ENCODE measurements at regions of chr5 and their contacts with region 1.

Region 1: DNA sequence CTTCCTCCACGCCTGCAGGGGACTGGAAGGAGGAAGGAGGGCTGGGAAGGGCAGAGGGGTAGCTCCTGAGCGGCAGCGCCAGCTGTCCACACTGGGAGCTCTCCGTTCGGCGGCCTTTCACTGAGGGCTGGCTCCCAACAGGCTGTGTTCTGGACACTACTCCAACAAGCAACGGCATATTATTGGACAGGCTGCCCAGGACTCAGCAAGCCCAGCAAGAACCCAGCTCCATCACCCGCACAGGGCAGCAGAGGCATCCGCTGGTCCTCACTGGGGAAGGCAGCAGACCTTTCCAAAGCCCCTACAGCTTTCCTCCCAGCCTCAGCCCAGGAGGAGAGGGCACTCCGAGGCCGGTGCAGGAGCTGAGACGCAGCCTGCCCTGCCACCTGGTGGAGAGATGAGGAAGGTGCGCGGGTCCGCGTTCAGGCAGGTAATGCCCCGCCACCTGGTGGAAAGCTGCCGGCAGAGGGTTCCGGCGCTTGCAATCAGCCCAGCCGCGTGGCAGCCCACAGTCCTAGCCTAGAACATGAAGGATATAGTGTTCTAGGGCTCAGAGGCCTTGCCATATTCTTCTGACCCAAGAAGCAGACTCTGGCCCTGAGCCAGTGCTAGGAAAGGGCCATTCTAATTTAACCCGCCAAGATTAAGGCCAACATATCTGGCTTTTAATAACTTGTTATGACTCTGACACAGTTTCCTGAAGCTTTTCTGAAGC is 74.4 kb downstream of the NRG2 start:
- DNase-seq: peak; percentile 90
- CTCF ChIP-seq: peak; percentile 100

Region 2: GRCh38 chr5:139787568-139788293 is 181.0 kb before region 1 on chr5:
- CTCF ChIA-PET with region 1: interaction called, 439 read pairs
- POLR2A ChIA-PET with region 1: no interaction called
- DNase-seq: peak; percentile 94
- CTCF ChIP-seq: peak; percentile 95

Region 3: GRCh38 chr5:139837631-139838422 is 130.9 kb before region 1 on chr5:
- CTCF ChIA-PET with region 1: interaction called, 73 read pairs
- POLR2A ChIA-PET with region 1: no interaction called
- DNase-seq: no peak
- CTCF ChIP-seq: no peak

Region 4: DNA sequence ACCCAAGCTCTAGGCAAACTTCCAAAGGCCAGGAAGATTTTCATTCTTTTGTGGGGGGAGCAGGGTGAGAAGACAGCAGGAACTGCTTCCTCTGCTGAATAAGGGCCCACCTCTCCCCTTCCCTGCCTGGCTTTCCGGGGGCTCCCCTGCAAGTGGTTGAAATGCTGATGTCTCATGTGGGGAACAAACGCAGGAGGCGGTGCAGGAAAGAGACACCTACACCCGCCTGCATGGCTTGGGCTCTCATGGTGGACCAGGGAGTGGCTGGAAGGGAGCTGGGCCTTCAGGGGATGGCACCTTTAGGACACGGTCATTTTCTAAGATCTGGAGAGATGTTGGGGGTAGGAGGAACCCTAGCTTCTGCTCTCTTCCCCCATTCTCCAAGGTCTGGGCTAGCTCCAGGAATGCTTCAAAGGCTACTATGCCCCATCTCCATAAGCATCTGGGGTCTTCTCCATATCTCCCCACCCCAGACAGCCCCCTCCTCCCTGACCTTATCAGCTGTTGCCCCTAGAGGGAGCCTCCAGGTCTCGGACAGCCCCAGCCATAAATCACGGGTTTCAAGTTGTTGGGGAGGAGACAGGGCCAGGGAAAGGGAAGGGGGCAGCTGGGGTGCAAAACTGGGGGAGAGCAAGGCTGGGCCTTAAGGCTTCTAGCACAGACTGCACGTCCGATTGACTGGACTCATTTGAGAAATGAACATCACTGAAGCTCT is 96.5 kb before region 1 on chr5:
- CTCF ChIA-PET with region 1: interaction called, 38 read pairs
- POLR2A ChIA-PET with region 1: no interaction called
- DNase-seq: no peak
- CTCF ChIP-seq: peak; percentile 6

Region 5: GRCh38 chr5:139925650-139926640 is 42.8 kb before region 1 on chr5:
- CTCF ChIA-PET with region 1: interaction called, 13 read pairs
- POLR2A ChIA-PET with region 1: no interaction called
- DNase-seq: no peak
- CTCF ChIP-seq: no peak

Region 6: DNA sequence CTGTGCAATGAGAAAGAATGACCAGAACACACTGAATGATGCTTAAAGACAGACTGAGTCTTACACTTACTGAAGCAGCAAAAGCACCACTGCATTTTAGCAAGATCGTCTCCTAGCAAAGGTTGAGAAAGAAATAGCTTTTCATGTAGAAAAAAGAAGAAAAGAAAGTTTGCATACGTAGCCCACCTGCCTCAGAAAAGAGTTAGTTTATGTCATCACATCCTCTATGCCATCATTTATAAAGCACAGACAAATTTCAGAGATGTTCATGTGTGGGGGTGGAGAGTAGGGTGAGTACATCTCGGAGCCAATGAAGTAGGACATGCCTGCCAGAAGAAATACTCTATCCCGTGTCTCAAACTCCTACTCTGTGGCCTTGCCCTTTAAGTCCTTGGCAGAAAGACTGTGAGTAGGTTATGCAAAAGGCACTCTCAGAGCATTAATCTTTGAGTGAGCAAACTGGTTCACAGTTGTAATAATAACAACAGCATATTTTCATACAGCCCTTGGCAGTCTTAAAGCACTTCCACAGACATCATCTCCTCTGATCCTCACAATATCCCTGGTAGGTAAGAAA is 52.0 kb after region 1 on chr5:
- CTCF ChIA-PET with region 1: interaction called, 17 read pairs
- POLR2A ChIA-PET with region 1: no interaction called
- DNase-seq: no peak
- CTCF ChIP-seq: no peak

Region 7: DNA sequence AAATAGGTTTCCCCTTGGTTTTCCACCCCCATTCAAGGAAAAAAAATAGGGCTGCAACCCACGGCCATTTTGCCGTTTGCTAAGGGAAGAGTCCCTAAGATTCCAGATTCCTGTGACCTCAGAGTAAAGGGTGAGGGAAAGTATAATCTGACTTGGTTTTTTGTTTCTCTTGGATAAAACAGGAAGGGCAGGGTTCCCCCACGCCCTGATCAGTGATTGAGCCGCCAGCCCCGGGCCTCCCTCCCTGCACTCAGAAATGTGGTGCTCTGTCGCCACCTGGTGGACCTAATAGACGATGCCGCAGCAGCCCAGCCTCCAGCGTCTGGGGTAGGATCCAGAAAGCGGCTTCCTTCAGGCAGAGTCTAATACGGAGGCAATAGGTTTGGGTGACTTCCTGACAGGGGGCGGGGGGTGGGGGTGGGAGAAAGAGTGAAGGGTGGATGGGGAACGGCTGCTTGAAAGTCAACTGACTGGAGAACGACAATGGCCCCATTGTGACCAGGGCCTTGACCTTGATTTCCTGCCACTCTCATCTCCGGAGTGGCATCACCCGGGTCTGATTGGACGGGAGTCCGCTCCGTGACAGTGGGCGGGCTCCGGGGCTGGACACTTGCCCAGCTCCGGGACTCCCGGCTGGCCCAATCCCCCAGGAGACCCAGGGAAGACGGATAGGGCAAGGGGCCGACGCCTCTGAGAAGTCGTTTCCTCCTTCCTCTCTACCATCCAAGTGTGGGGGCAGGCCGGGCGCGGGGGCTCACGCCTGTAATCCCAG is 188.5 kb after region 1 on chr5:
- CTCF ChIA-PET with region 1: interaction called, 22 read pairs
- POLR2A ChIA-PET with region 1: no interaction called
- DNase-seq: peak; percentile 90
- CTCF ChIP-seq: peak; percentile 91

Measured in GM10248 (cell line).